Right cardiac atrium (tissue), 5 donors: ENCODE measurements at regions of chr9 and their contacts with region 1.

Region 1: GRCh38 chr9:74609671-74610405 is 112.7 kb downstream of the RORB start:
- DNase-seq: no peak
- ATAC-seq: no peak
- H3K4me3 ChIP-seq: no peak overlapping the region
- H3K27ac ChIP-seq: no peak overlapping the region
- H3K4me1 ChIP-seq: no peaks in the 10 kb centered on the region
- H3K27me3 ChIP-seq: no peaks in the 10 kb centered on the region

Region 2: DNA sequence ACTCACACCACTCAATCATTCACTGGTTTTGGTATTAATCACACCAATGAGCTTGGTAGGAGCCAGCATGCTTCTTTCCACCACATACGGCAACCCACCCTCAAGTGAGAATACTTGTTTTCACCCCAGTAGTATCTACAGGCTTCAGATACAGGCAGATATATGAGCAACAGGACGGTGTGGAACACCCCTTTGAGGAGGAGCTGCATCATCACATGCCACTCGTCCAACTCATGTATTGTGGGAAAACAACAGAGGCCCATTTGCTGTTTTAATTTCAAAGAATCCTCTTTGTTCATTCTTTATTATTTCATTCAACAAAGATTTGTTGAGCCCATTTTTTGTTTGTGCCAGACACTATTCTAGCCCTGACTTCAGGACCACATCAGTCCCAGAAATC is 66.7 kb before region 1 on chr9:
- intact Hi-C with region 1: loop called in 1 of 4 experiments (anchors 10 kb)
- DNase-seq: no peak
- ATAC-seq: no peak
- H3K4me3 ChIP-seq: no peak overlapping the region
- H3K27ac ChIP-seq: no peak overlapping the region
- H3K4me1 ChIP-seq: no peaks in the 10 kb centered on the region
- H3K27me3 ChIP-seq: no peaks in the 10 kb centered on the region